ENCODE measurements at regions of chr17 and their contacts with region 1.

Region 1: DNA sequence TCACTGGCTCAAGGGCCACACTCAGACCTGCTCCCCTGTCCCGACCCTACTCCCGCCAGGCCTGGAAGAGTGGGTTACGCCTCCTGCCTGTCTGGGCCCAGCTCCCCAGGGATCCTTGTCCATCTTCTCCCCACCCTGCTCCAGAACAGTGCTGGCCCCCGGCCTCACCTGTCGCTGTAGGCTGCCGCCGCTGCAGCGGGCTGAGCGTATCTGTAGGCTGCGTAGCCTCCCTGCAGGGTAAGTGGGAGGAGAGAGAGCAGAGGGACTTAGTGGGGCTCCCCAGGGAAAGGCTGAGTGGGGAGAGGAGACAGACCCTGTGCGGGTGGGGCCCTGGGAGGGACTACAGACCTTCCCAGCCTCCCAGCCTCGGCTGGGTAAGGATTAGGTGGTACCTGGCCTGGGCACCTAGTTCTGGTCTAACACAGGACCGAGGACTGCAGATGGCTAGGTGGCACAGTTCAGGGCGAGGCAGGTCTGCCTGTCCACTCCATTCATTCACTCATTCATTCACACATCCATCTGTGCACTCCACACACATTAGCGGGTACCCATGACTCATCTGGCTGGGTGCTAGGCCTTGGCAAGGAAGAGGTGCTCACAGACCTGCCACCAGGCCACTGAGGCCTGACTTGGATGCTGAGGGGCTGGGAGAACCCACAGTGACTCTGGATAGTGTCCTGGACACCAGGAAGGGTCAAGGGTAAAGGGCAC is 20.9 kb downstream of the ENGASE start:
- DNase-seq: no peak
- H3K4me3 ChIP-seq: no peak overlapping the region
- H3K27ac ChIP-seq: no peak overlapping the region
- H3K4me1 ChIP-seq: peaks cover 0 to 16% (median 5%) of the 10 kb centered on the region in 4 experiments; a peak in 5 of 7 replicates
- H3K27me3 ChIP-seq: no peaks in the 10 kb centered on the region
- CTCF ChIP-seq: no peak
- EP300 ChIP-seq: no peak
- POLR2A ChIP-seq: no peak
- RAD21 ChIP-seq: no peak

Region 2: GRCh38 chr17:79033732-79034501 is 61.6 kb before region 1 on chr17:
- CTCF ChIA-PET with region 1: no interaction called
- POLR2A ChIA-PET with region 1: no interaction called
- DNase-seq: no peak
- H3K4me3 ChIP-seq: no peak overlapping the region
- H3K27ac ChIP-seq: no peak overlapping the region
- H3K4me1 ChIP-seq: 0 out of 7 replicates have a peak, but pooled peaks cover 0 to 3% (median 0%) of the 10 kb centered on the region in 4 experiments
- H3K27me3 ChIP-seq: peaks cover 0 to 7% (median 3%) of the 10 kb centered on the region in 4 experiments; a peak in 4 of 7 replicates
- CTCF ChIP-seq: no peak
- EP300 ChIP-seq: no peak
- POLR2A ChIP-seq: no peak
- RAD21 ChIP-seq: no peak

Region 3: GRCh38 chr17:79054200-79054960 is 41.1 kb before region 1 on chr17:
- CTCF ChIA-PET with region 1: no interaction called
- POLR2A ChIA-PET with region 1: no interaction called
- DNase-seq: no peak
- H3K4me3 ChIP-seq: no peak overlapping the region
- H3K27ac ChIP-seq: no peak overlapping the region
- H3K4me1 ChIP-seq: no peaks in the 10 kb centered on the region
- H3K27me3 ChIP-seq: no peaks in the 10 kb centered on the region; a peak in 4 of 7 replicates
- CTCF ChIP-seq: no peak
- EP300 ChIP-seq: no peak
- POLR2A ChIP-seq: no peak
- RAD21 ChIP-seq: no peak

Region 4: DNA sequence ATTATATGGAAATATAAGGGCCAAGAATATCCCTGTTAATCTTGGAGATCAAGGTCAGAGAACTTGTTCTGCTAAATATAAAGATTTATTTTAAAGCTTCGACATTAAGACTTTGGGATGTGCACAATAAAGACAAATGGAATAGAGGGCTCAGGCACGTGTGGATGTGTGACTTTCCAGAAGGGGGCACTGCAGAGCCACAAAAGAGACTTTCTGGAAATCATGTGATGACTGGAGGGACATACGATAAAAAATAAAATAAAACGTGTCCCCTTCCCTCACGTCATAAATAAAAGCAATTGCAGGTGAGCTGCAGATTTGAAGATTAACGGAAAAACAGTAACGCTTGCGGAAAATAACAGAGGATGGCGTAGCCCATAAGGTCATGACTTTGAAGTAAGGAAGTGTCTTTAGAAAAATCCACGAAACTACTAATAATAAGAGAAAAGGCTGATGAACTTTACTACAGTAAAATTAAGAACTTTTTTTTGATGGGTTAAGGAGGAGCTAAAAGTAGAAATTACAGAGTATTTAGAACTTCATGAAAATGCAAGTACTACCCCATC is 30.3 kb before region 1 on chr17:
- CTCF ChIA-PET with region 1: interaction called, 11 read pairs
- POLR2A ChIA-PET with region 1: no interaction called
- DNase-seq: peak in 1 of 2 experiments; percentile 76
- H3K4me3 ChIP-seq: no peak overlapping the region
- H3K27ac ChIP-seq: no peak overlapping the region
- H3K4me1 ChIP-seq: no peaks in the 10 kb centered on the region
- H3K27me3 ChIP-seq: peaks cover 0 to 2% (median 0%) of the 10 kb centered on the region in 4 experiments; a peak in 1 of 7 replicates
- CTCF ChIP-seq: peak; percentile 30 to 67 (median 64)
- EP300 ChIP-seq: no peak
- POLR2A ChIP-seq: no peak
- RAD21 ChIP-seq: peak; percentile 74 to 76

Region 5: DNA sequence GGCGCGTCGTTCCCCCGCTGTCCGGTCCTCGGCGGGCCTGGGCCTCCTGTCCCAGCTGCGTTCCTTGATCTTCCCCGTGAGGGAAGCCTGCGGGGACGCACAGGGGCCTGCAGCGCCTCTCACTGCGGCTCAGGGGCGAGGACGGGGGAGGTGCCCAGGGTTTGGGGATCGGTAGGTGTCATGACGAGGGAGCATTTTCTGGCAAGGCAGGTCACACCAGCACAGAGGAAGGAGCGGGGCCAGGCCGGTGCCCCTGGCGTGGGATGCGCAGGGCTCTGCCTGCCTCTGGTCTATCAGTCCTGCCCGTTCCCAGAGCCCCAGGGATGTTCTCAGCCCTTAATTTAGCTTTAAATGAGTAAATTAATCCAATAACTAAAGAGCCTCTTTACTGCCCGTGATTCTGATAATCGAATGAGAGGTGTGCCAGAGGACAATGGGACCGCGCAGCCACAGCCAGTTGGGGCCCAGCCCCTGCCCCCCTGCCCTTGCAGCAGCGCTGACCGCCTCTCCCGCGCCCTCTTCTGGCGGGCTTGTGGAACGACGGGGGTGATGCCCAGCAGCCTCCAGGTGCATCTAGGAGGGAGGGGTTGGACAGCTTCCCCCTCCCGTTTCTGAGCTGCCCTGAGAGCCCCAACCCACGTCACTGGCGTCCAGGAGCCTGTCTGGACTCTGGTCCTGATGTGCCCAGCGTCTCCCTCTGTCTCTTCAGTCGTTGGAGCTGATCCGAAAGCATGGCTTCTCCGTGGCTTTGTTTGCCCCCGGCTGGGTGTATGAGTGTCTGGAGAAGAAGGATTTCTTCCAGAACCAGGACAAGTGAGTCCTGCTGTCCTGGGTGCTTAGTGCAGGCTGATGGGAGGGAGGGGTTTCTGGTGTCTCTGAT is 12.9 kb before region 1 on chr17:
- CTCF ChIA-PET with region 1: interaction called, 23 read pairs
- POLR2A ChIA-PET with region 1: interaction called, 4 read pairs
- DNase-seq: peak in 1 of 2 experiments; percentile 91
- H3K4me3 ChIP-seq: no peak overlapping the region
- H3K27ac ChIP-seq: no peak overlapping the region
- H3K4me1 ChIP-seq: peaks cover 0 to 2% (median under 1%) of the 10 kb centered on the region in 4 experiments; a peak in 1 of 7 replicates
- H3K27me3 ChIP-seq: no peaks in the 10 kb centered on the region
- CTCF ChIP-seq: peak; percentile 93 to 95 (median 94)
- EP300 ChIP-seq: no peak
- POLR2A ChIP-seq: no peak
- RAD21 ChIP-seq: peak; percentile 64 to 69

Region 6: DNA sequence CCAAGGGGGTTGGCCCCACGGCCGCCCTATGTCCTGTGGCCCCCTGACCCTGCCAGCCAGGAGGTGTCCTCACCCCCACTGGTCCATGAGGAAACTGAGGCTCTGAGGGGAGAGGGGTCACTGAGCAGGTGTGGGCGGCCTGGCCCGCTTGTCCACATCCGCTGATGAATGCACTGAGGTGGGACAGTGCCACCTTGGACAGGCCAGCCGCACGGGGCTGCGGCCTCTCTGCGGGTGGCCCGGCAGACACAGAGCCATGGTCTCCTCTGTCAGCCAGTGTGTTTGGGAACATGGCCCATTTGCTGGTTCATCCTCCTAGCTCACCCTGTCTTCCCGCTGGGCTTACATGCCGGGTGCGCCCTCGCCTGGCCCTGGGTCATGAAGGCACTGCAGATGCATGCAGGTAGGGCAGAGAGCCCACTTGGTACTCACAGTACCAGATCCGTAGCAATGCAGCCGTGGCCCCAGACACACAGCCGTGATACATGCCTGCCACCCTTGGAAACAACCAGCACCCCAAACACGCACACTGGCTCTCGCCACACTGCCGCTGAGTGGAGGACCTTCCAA is 73.1 kb after region 1 on chr17:
- CTCF ChIA-PET with region 1: no interaction called
- POLR2A ChIA-PET with region 1: no interaction called
- DNase-seq: no peak
- H3K4me3 ChIP-seq: no peak overlapping the region
- H3K27ac ChIP-seq: no peak overlapping the region
- H3K4me1 ChIP-seq: peaks cover 0 to 2% (median 0%) of the 10 kb centered on the region in 4 experiments; a peak in 2 of 7 replicates
- H3K27me3 ChIP-seq: no peaks in the 10 kb centered on the region
- CTCF ChIP-seq: peak; percentile 18 to 22 (median 18); a peak in 3 of 4 replicates
- EP300 ChIP-seq: no peak
- POLR2A ChIP-seq: no peak
- RAD21 ChIP-seq: peak; percentile 24 to 37